BJ (cell line): ENCODE measurements at regions of chr11 and their contacts with region 1.

Region 1: DNA sequence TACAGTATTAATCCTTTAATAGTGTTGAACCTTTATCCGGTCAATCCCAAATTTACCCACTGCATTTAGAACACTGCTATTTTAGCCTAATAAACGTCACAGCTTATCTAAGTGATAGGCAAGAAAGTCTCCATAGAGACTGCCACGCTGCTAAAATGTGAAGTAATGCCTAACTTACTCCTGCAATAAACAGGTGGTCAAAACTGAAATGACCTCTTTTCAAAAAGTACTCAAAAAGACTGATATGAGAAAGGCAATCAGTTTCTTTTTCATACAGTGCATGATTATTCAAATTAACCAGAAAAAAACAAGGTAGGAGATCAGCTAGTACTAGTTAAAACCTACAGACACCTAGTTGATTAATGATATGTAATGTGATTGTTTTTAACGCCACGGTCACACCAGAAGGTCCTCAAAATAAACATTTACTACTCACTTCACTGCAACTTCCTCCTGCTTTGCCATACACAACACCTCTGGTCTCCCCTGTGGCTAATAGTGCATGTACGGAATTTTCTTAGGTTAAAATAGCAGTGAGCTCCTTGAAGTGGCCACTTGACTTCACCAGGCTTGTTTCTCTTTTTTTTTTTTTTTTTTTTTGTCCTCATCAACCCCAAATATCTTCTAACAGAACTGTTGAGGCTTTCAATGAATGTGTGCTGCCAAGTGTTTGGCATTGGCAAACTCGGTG is 8.8 kb downstream of the ATP5MG start:
- DNase-seq: no peak
- H3K4me3 ChIP-seq: no peak overlapping the region
- H3K27me3 ChIP-seq: no peaks in the 10 kb centered on the region
- CTCF ChIP-seq: no peak

Region 2: GRCh38 chr11:118448294-118448693 is 38.1 kb after region 1 on chr11:
- CTCF ChIA-PET with region 1: no interaction called
- POLR2A ChIA-PET with region 1: interaction called, 22 read pairs
- DNase-seq: no peak
- H3K4me3 ChIP-seq: no peak overlapping the region
- H3K27me3 ChIP-seq: no peaks in the 10 kb centered on the region
- CTCF ChIP-seq: no peak

Region 3: GRCh38 chr11:118514103-118514502 is 103.9 kb after region 1 on chr11:
- CTCF ChIA-PET with region 1: no interaction called
- POLR2A ChIA-PET with region 1: interaction called, 11 read pairs
- DNase-seq: no peak
- H3K4me3 ChIP-seq: no peak overlapping the region
- H3K27me3 ChIP-seq: no peaks in the 10 kb centered on the region
- CTCF ChIP-seq: no peak

Region 4: GRCh38 chr11:118530408-118531339 is 120.5 kb after region 1 on chr11 and contains the start of gene TMEM25:
- CTCF ChIA-PET with region 1: no interaction called
- POLR2A ChIA-PET with region 1: no interaction called
- DNase-seq: no peak
- H3K4me3 ChIP-seq: peak within 1 kb of the TSS; percentile 71
- H3K27me3 ChIP-seq: no peaks in the 10 kb centered on the region
- CTCF ChIP-seq: no peak
- polyA plus RNA-seq, gene TMEM25: 16.1 and 30.2 TPM in 2 replicates